Lower leg skin (tissue), 4 donors: ENCODE measurements at regions of chr1 and their contacts with region 1.

Region 1: GRCh38 chr1:29703596-29704370 is 467.5 kb downstream of the PTPRU start:
- DNase-seq: no peak
- H3K4me3 ChIP-seq: no peak overlapping the region
- CTCF ChIP-seq: no peak
- POLR2A ChIP-seq: no peak

Region 2: GRCh38 chr1:30929135-30929889 is 1225.5 kb after region 1 on chr1:
- intact Hi-C with region 1: loop called (anchors 10 kb)
- DNase-seq: no peak
- H3K4me3 ChIP-seq: no peak overlapping the region
- CTCF ChIP-seq: no peak
- POLR2A ChIP-seq: no peak